A549 (cell line): ENCODE measurements at regions of chr10 and their contacts with region 1.

Region 1: DNA sequence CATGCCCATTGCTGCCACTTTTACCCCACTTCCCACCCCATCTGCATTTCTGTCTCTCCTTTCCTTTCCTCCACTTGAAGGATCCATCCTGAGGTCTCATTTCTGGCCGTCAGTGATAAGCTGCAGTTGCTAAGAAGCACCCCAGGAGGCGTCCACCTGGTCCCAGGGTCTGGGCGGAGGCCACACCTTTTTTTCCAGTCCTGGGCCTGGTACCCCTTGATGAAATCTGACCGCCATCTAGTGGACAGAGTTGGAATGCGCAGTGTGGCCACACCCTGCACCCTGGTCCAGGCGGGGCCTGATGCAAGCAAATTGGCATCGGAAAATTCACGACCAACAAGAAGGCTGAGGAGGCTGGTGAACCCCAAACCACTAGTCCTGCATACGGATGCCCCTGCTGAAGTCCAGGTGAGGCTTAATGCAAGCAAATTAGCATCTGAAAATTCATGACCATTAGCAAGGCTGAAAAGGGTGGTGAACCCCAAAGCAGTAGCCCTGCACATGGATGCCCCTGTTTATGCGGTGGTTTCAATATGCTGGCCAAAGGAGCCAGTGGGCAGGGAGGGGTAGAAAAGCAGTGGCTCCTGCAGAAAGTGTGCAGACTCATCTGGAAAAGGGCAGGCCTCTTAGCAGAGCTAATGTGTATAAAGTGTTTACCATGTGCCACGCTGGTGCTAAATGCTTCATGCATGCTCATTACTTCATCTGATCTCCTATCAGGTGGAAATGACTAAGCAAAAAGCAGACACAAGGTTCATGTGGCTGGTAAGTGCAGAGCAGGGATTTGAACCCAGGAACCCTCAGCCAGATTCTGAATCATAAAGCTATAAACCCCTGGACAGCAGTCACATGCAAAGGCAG is 43.2 kb downstream of the GPAM start:
- DNase-seq: peak; percentile 81 to 91
- ATAC-seq: peak; percentile 92 to 99
- H3K4me3 ChIP-seq: no peak overlapping the region
- H3K27ac ChIP-seq: no peak overlapping the region
- H3K4me1 ChIP-seq: no peaks in the 10 kb centered on the region
- CTCF ChIP-seq: peak; percentile 80
- EP300 ChIP-seq: no peak
- POLR2A ChIP-seq: no peak
- RAD21 ChIP-seq: peak; percentile 73 to 75

Region 2: GRCh38 chr10:112115799-112116385 is 24.4 kb before region 1 on chr10:
- CTCF ChIA-PET with region 1: interaction called, 42 read pairs
- POLR2A ChIA-PET with region 1: no interaction called
- DNase-seq: peak; percentile 33 to 46
- ATAC-seq: peak; percentile 78 to 87
- H3K4me3 ChIP-seq: no peak overlapping the region
- H3K27ac ChIP-seq: no peak overlapping the region
- H3K4me1 ChIP-seq: no peaks in the 10 kb centered on the region
- CTCF ChIP-seq: peak; percentile 54
- EP300 ChIP-seq: no peak
- POLR2A ChIP-seq: no peak
- RAD21 ChIP-seq: peak; percentile 14 to 40; a peak in 2 of 5 replicates

Region 3: GRCh38 chr10:112151524-112152039 is 11.2 kb after region 1 on chr10:
- CTCF ChIA-PET with region 1: interaction called, 16 read pairs
- POLR2A ChIA-PET with region 1: no interaction called
- DNase-seq: no peak
- ATAC-seq: no peak
- H3K4me3 ChIP-seq: no peak overlapping the region
- H3K27ac ChIP-seq: no peak overlapping the region
- H3K4me1 ChIP-seq: no peaks in the 10 kb centered on the region
- CTCF ChIP-seq: no peak
- EP300 ChIP-seq: no peak
- POLR2A ChIP-seq: no peak
- RAD21 ChIP-seq: no peak

Region 4: GRCh38 chr10:112183329-112184051 is 43.1 kb after region 1 on chr10 and contains the start of gene GPAM:
- CTCF ChIA-PET with region 1: interaction called, 16 read pairs
- POLR2A ChIA-PET with region 1: interaction called, 3 read pairs
- DNase-seq: peak; percentile 68 to 89
- ATAC-seq: peak; percentile 97 to 99
- H3K4me3 ChIP-seq: peak within 1 kb of the TSS; percentile 93
- H3K27ac ChIP-seq: peak within 1 kb of the TSS; percentile 91 to 92
- H3K4me1 ChIP-seq: peaks cover 11% of the 10 kb centered on the region; the same call in 2 of the 3 replicates
- CTCF ChIP-seq: no peak
- EP300 ChIP-seq: no peak
- POLR2A ChIP-seq: peak; percentile 96
- RAD21 ChIP-seq: 0 out of 5 replicates have a peak, but pooled peaks of 1 of the 2 experiments have one; percentile 18
- polyA plus RNA-seq, gene GPAM: 11.3 and 13.3 TPM in 2 replicates

Region 5: DNA sequence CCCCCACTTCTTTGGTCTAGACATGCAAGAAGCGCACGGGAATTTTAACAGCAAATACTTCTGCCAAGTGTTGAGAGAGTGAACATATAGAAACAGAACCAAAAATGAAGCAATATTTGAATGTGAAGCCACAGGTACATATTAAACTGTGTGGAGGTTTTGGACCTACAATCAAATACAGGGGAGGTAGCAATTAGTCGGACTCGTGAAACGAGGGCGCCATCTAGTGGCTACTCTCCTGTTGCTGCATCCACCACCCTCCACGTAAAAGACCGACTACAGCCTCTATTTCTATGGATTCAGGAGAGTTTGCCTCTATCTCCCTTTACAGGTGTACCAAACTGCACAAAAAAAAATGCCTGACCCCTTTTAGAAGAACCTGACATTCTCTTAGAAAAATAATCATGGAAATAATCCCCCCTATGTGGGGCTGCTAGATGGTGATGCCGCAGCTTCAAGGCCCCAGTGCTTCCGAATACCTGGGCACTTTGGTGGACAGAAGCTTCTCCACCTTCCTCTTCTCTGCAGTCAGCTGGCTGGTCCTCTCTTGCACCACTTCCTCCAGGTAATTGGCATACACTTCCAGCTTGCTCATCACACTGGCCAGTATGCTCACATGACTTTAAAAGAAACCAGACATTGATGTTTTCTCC is 174.6 kb after region 1 on chr10:
- CTCF ChIA-PET with region 1: interaction called, 21 read pairs
- POLR2A ChIA-PET with region 1: no interaction called
- DNase-seq: peak; percentile 70 to 82
- ATAC-seq: peak; percentile 92 to 98
- H3K4me3 ChIP-seq: no peak overlapping the region
- H3K27ac ChIP-seq: no peak overlapping the region
- H3K4me1 ChIP-seq: no peaks in the 10 kb centered on the region
- CTCF ChIP-seq: peak; percentile 92
- EP300 ChIP-seq: no peak
- POLR2A ChIP-seq: no peak
- RAD21 ChIP-seq: peak; percentile 89 to 90